A549 (cell line): ENCODE measurements at regions of chr17 and their contacts with region 1.

Region 1: DNA sequence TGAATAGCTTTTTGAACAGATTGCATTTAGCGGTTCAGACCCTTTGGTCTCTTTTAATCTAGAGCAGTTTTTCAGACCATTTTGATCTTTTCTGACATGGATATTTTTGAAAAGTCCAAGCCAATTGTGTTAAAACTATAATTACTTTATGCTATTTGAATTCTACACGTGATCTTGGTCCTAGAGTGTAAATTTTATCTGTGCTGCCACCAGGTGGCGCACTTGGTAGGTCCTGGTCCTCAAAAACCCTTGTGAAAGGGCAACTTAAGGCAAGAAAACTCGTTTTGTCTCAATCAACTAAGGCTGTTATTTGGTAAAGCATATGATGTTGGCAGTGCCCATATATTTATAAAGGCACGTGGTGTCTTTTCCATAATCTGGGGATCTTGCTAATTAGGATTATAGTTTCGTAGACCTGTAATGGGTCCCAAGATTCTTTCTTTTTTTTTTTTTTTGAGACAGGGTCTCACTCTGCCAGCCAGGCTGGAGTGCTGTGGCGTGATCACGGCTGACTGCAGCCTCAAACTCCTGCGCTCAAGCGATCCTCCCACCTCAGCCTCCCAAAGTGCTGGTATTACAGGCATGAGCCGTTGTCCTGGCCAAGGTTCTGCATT is 43.9 kb upstream of the TEX2 start:
- DNase-seq: peak; percentile 73 to 76
- ATAC-seq: peak; percentile 68 to 83; a peak in 4 of 6 replicates
- H3K4me3 ChIP-seq: no peak overlapping the region
- H3K27ac ChIP-seq: no peak overlapping the region
- H3K4me1 ChIP-seq: no peaks in the 10 kb centered on the region
- CTCF ChIP-seq: peak; percentile 97
- EP300 ChIP-seq: no peak
- POLR2A ChIP-seq: no peak
- RAD21 ChIP-seq: peak; percentile 71

Region 2: DNA sequence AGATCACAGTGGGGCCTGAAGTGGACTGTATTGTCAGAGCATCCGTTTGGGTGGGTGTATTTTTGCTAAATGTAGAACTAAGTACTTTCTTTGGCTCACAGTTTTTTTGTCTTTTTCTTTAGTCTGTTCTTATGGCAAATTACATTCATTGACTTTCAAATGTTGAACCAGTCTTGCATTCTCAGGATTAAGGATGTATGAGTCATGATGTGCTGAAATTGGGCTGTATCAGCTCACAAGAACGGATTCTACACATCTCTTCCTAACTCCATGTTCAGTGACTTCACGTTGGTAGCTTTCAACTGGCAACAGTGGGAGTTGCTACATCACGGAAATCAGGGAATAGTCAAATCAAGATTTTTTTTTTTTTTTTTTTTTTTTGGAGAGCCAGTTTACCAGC is 110.3 kb before region 1 on chr17:
- CTCF ChIA-PET with region 1: no interaction called
- POLR2A ChIA-PET with region 1: no interaction called
- DNase-seq: no peak
- ATAC-seq: no peak
- H3K4me3 ChIP-seq: no peak overlapping the region
- H3K27ac ChIP-seq: no peak overlapping the region
- H3K4me1 ChIP-seq: peaks cover 11% of the 10 kb centered on the region; the same call in 2 of the 3 replicates
- CTCF ChIP-seq: no peak
- EP300 ChIP-seq: no peak
- POLR2A ChIP-seq: no peak
- RAD21 ChIP-seq: no peak

Region 3: DNA sequence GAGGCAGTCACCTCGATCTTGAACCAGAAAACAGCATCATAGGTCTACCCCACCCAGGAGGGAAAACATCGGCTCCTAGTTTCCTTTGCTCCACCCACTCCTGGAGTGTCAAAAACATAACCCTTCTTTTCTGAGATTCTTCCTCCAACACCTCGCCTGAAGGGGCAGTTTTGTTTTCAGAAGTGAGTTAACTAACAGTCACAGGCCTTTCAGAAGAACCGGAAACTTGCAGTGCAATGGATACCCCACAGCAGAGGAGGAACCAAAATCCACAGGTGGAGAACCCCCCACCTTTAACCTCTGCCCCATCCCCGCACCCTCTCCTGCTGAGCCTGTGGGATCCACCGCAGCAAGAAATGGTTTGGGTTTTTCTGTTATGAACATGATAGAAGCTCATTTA is 36.1 kb before region 1 on chr17:
- CTCF ChIA-PET with region 1: no interaction called
- POLR2A ChIA-PET with region 1: no interaction called
- DNase-seq: no peak
- ATAC-seq: no peak
- H3K4me3 ChIP-seq: no peak overlapping the region
- H3K27ac ChIP-seq: no peak overlapping the region
- H3K4me1 ChIP-seq: no peaks in the 10 kb centered on the region
- CTCF ChIP-seq: no peak
- EP300 ChIP-seq: no peak
- POLR2A ChIP-seq: no peak
- RAD21 ChIP-seq: no peak

Region 4: DNA sequence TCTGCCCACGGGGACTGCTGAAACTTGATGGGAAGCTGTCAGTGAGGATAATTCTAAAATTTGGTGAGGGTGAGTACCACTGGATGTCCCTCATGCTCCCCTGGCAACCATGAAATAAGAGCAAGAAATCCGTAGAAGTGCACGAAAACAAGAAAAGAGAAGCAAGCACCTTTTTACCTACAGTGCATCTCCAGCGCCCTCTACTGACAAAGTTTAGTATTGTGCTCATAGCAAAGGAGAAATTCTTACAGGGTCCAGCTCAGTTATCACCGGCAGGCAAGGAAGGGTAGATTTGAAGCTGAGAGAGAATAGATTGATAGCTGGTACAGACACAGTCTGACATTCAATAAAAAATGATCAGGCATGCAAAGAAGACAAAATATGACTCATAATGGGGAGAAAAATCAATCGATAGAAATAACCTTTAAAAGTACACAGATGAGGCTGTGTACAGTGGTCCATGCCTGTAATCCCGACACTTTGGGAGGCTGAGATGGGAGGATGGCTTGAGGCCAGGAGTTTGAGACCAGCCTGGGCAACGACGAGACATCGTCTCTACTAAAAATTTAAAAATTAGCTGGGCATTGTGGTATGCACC is 15.6 kb before region 1 on chr17:
- CTCF ChIA-PET with region 1: interaction called, 31 read pairs
- POLR2A ChIA-PET with region 1: no interaction called
- DNase-seq: peak in 1 of 2 experiments; percentile 52
- ATAC-seq: no peak
- H3K4me3 ChIP-seq: no peak overlapping the region
- H3K27ac ChIP-seq: no peak overlapping the region
- H3K4me1 ChIP-seq: no peaks in the 10 kb centered on the region
- CTCF ChIP-seq: peak; percentile 46
- EP300 ChIP-seq: no peak
- POLR2A ChIP-seq: no peak
- RAD21 ChIP-seq: peak in 1 of 2 experiments; percentile 55; a peak in 2 of 5 replicates

Region 5: GRCh38 chr17:64326395-64327054 is 19.6 kb after region 1 on chr17:
- CTCF ChIA-PET with region 1: interaction called, 59 read pairs
- POLR2A ChIA-PET with region 1: no interaction called
- DNase-seq: peak in 1 of 2 experiments; percentile 38
- ATAC-seq: peak in 1 of 2 experiments; percentile 26; a peak in 2 of 6 replicates
- H3K4me3 ChIP-seq: no peak overlapping the region
- H3K27ac ChIP-seq: peak overlapping the region in 1 of 2 experiments; percentile 52; a peak in 3 of 6 replicates
- H3K4me1 ChIP-seq: 0 out of 3 replicates have a peak, but pooled peaks cover under 1% of the 10 kb centered on the region
- CTCF ChIP-seq: no peak
- EP300 ChIP-seq: peak; percentile 19 to 69; a peak in 2 of 5 replicates
- POLR2A ChIP-seq: peak; percentile 7; the same call in 1 of the 2 replicates
- RAD21 ChIP-seq: no peak